Heart left ventricle (tissue), 16 donors: ENCODE measurements at regions of chr6 and their contacts with region 1.

Region 1: GRCh38 chr6:70094156-70094555 is 208.7 kb downstream of the COL9A1 start:
- DNase-seq: no peak
- ATAC-seq: no peak
- H3K4me3 ChIP-seq: no peak overlapping the region
- H3K27ac ChIP-seq: no peak overlapping the region
- H3K4me1 ChIP-seq: no peaks in the 10 kb centered on the region
- H3K27me3 ChIP-seq: no peaks in the 10 kb centered on the region
- CTCF ChIP-seq: no peak
- POLR2A ChIP-seq: no peak

Region 2: DNA sequence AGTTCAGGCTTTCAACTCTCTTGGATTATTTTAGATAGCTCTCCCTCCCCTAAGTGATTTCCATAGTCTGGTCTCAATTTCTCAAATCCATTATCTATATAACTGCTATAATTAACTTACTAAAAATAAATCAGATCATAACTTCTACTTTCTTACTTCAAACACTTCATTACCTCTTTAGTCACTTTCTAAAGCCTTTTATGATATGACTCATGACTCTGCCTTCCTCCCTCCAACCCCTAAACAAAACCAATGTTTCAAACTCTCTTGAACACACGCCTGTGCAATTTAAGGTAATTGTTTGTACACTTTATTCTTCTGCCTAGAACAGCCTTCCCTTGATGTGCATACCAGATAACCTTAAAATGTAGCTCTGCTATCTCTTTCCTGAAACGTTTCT is 397.9 kb before region 1 on chr6:
- intact Hi-C with region 1: no loop called
- DNase-seq: no peak
- ATAC-seq: no peak
- H3K4me3 ChIP-seq: no peak overlapping the region
- H3K27ac ChIP-seq: no peak overlapping the region
- H3K4me1 ChIP-seq: no peaks in the 10 kb centered on the region
- H3K27me3 ChIP-seq: no peaks in the 10 kb centered on the region
- CTCF ChIP-seq: no peak
- POLR2A ChIP-seq: no peak

Region 3: DNA sequence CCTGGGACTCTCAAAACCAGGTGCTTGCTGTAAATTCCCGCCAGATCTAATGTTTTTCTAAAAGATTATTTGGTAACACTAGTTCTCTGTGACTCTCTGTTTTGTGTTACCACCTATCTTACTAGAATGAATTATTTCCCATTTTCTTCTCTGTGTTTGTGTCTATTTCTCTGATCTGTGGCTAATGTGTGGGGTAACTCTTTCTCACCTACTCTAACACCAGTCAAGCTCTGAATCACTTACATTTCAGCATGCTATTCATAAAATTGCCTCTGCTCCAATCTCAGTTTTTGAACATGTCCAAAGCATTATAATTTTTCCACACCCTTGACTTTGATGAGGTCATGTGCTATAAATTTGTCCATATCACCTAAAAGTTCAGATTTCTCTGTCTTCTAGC is 251.0 kb before region 1 on chr6:
- intact Hi-C with region 1: loop called in 1 of 10 experiments (anchors 5 kb)
- DNase-seq: no peak
- ATAC-seq: no peak
- H3K4me3 ChIP-seq: no peak overlapping the region
- H3K27ac ChIP-seq: no peak overlapping the region
- H3K4me1 ChIP-seq: peaks cover 0 to 7% (median 0%) of the 10 kb centered on the region in 12 donors
- H3K27me3 ChIP-seq: peaks cover 0 to 14% (median 0%) of the 10 kb centered on the region in 9 donors
- CTCF ChIP-seq: no peak
- POLR2A ChIP-seq: no peak